ENCODE measurements at regions of chr17 and their contacts with region 1.

Region 1: DNA sequence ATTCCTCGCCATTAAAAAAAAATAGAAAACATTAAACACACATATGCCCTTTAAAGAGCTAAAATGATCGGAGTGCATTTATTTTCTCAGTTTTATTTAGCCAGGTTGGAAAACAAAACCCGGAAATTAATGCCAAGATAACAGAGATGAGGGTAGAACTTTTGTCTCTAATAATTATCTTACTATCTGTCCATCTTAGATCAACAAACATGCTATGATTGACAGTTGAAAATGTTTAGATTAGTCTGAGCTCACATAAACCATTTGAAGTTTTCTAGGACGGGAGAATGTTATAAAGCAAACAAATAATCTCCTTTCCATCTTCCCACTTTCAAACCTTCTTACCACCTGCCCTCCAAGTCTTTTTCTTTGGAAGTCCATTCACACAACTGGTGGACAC is 333.4 kb upstream of the SOX9 start:
- DNase-seq: no peak
- H3K4me3 ChIP-seq: no peak overlapping the region
- H3K27ac ChIP-seq: no peak overlapping the region
- H3K4me1 ChIP-seq: no peaks in the 10 kb centered on the region
- H3K27me3 ChIP-seq: no peaks in the 10 kb centered on the region
- CTCF ChIP-seq: no peak

Region 2: GRCh38 chr17:71118039-71118438 is 669.4 kb before region 1 on chr17:
- intact Hi-C with region 1: no loop called
- DNase-seq: no peak
- H3K4me3 ChIP-seq: no peak overlapping the region
- H3K27ac ChIP-seq: no peak overlapping the region
- H3K4me1 ChIP-seq: no peaks in the 10 kb centered on the region
- H3K27me3 ChIP-seq: no peaks in the 10 kb centered on the region
- CTCF ChIP-seq: no peak

Region 3: GRCh38 chr17:71809537-71809936 is 22.1 kb after region 1 on chr17:
- intact Hi-C with region 1: no loop called
- DNase-seq: no peak
- H3K4me3 ChIP-seq: no peak overlapping the region
- H3K27ac ChIP-seq: no peak overlapping the region
- H3K4me1 ChIP-seq: no peaks in the 10 kb centered on the region
- H3K27me3 ChIP-seq: no peaks in the 10 kb centered on the region
- CTCF ChIP-seq: no peak

Region 4: DNA sequence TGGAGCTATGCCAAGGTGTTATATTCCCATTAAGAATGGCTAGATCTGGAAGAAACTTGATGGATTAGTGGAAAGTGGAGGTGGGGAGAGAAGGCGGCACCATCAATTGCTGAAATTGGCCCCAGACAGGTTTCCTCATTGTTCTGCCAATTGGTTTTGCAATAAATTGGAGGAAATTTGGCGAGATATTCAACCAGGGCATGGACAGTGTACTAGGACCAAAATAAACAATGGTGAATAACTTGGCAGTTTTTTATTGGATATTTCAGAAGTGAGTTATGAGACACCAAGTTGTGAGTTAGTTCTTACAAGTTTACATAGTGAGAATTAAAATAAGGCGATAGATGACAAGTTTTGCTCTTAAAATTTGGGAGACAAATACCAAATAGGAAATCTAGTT is 292.3 kb after region 1 on chr17:
- intact Hi-C with region 1: loop called (anchors 10 kb)
- DNase-seq: no peak
- H3K4me3 ChIP-seq: no peak overlapping the region
- H3K27ac ChIP-seq: no peak overlapping the region
- H3K4me1 ChIP-seq: no peaks in the 10 kb centered on the region
- H3K27me3 ChIP-seq: no peaks in the 10 kb centered on the region
- CTCF ChIP-seq: no peak

Measured in ascending aorta (tissue), 2 donors.